Activated naive CD8-positive, alpha-beta T cell treated with anti-CD3 and anti-CD28 coated beads, Interleukin-2, amount 10 ng/mL, durations not matched to agents 7 days and 5 days (primary cell): ENCODE measurements at regions of chr3 and their contacts with region 1.

Region 1: DNA sequence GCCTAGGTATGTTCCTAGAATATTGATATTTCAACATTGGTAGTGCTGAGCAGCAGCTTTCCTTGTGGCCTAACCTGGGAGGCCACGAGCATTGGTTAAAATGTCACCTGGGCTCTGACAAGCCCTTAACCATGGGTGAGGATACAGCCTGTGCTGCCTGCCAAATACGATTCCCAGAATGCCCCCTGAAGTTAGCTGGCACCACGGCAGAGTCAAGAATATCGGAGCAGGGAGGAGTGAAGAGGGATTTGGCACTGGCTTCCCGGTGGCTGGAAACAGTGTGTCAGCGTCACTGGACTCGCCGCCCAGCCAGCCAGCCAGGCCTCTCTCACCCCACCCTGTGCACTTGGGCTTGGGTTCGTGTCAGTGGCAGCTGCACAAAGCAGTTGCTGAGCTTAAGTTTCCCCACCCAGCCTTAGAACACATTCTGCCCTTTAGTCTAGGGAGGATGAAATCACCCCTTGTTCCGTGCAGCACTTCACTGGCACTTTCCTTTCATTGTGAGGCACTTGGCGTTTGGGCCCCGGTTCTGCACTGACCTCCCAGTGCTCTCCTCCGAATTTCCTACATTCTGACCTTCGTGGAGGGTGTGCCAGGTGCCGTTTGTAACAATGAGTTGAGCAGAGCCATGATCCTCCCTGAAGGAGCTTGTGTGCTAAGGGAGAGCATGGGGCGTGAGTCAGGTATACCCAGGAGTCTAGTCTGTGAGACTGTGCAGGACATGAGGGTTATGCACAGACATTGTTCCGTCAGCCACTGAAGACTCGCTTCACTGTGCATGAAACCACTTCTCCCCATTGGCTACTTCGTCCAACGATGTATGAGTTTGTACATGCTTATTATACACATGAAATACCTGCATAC is 152.8 kb upstream of the BHLHE40 start:
- DNase-seq: no peak
- ATAC-seq: no peak
- H3K4me3 Mint-ChIP-seq: peak overlapping the region; percentile 86
- H3K27ac Mint-ChIP-seq: peak overlapping the region; percentile 92
- H3K4me1 Mint-ChIP-seq: peaks cover 91% of the 10 kb centered on the region
- H3K27me3 Mint-ChIP-seq: no peaks in the 10 kb centered on the region

Region 2: DNA sequence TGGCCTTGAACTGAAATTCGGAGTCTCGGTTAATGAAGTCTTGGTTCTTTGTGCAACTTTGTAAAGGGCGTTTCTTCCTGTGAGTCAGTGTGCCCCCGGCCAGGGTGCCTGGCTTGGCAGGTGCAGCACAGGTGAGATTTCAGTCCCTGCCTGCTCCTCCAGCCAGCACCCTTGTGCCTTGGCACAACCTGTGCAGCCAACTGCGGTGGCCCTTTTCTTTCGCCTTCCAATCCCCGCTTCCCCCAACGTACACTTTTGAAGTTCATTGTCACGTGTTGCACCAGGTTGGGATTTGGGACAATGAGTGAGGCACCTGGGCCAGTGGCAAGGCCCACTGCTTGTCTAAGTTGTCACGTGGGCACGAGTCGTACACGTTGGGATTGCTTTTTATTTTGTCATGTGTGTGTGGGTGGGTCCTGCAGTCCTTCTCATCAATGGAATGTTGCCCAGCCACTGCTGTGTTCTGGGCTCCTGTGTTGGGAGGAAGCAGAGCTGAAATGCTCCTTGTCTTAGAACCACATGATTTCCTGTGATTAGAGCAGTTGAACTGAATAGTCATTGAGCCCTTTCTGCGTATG is 90.1 kb before region 1 on chr3:
- POLR2A ChIA-PET with region 1: interaction called, 30 read pairs
- DNase-seq: no peak
- ATAC-seq: peak; percentile 20
- H3K4me3 Mint-ChIP-seq: peak overlapping the region; percentile 66
- H3K27ac Mint-ChIP-seq: peak overlapping the region; percentile 97
- H3K4me1 Mint-ChIP-seq: peaks cover 78% of the 10 kb centered on the region
- H3K27me3 Mint-ChIP-seq: no peaks in the 10 kb centered on the region

Region 3: DNA sequence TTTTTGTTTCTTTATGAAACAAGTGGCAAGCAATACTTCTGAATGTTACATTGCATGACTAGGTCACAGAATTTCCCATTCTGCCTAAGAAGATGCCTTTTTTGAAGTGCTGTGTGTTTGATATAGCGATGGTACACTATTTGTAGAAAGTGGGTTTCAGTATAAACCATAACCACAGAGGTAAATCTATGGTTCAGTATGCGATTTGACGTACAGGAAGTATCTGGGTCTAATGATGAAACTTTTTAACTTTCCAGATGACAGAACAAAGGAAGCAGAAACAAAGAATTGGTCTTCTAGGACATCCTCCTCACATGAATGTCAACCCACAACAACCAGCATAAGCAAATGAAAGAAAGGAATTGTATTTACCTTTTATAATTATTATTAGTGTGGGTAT is 19.4 kb after region 1 on chr3:
- POLR2A ChIA-PET with region 1: interaction called, 111 read pairs
- DNase-seq: no peak
- ATAC-seq: peak; percentile 59
- H3K4me3 Mint-ChIP-seq: peak overlapping the region; percentile 59
- H3K27ac Mint-ChIP-seq: peak overlapping the region; percentile 90
- H3K4me1 Mint-ChIP-seq: peaks cover 84% of the 10 kb centered on the region
- H3K27me3 Mint-ChIP-seq: no peaks in the 10 kb centered on the region